ENCODE measurements at regions of chrX and their contacts with region 1.

Region 1: GRCh38 chrX:71393919-71394318 is 27.8 kb downstream of the TAF1 start:
- DNase-seq: no peak
- H3K4me3 ChIP-seq: no peak overlapping the region
- H3K27ac ChIP-seq: no peak overlapping the region
- H3K4me1 ChIP-seq: no peaks in the 10 kb centered on the region
- H3K27me3 ChIP-seq: no peaks in the 10 kb centered on the region
- CTCF ChIP-seq: no peak

Region 2: DNA sequence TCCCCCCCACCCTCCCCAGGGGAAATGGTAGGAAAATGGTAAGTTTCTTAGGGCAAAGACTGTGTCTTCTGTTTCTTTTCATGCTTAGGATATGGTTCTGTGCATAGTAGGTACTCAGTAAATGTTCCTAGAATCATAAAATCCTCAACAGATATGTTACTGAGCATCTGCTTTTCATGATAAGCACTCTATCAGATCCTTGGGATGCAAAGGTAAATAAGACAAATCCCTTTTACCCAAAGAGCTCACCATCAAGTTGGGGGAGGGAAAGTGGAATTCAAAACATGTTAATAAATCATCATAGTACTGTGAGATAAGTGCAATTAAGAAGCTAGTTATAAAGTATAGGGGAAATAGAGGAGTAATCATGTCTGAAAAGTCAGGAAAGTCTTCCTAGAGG is 71.0 kb after region 1 on chrX:
- intact Hi-C with region 1: loop called (anchors 5 kb)
- DNase-seq: no peak
- H3K4me3 ChIP-seq: no peak overlapping the region
- H3K27ac ChIP-seq: no peak overlapping the region
- H3K4me1 ChIP-seq: no peaks in the 10 kb centered on the region
- H3K27me3 ChIP-seq: no peaks in the 10 kb centered on the region
- CTCF ChIP-seq: no peak

Region 3: GRCh38 chrX:71493111-71493613 is 99.2 kb after region 1 on chrX:
- intact Hi-C with region 1: no loop called
- DNase-seq: peak in 1 of 2 donors; percentile 37
- H3K4me3 ChIP-seq: peak overlapping the region; percentile 63 to 70
- H3K27ac ChIP-seq: peak overlapping the region in 1 of 2 donors; percentile 55
- H3K4me1 ChIP-seq: no peaks in the 10 kb centered on the region
- H3K27me3 ChIP-seq: no peaks in the 10 kb centered on the region
- CTCF ChIP-seq: no peak